ENCODE measurements at regions of chr11 and their contacts with region 1.

Region 1: DNA sequence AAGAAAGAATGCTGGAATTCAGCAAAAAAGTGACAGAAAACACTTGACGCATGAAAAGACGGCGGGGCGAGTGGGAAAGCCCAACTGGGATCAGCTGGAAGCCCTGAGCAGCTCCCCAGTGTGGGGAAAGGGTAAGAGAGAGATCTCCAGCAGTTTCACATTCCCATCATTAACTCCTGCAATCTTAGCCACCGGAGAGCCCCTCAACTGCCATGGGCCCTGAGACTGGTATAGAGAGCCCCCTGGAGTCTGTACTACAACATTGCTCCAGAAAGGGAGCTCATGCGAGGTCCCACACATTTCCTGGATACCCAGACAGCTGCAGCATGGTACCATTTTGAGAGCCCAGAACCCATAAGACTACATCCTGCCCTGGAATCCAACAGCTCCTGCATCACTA is 31.1 kb downstream of the MRGPRX4 start:
- DNase-seq: peak; percentile 55
- ATAC-seq: peak; percentile 100
- H3K4me3 Mint-ChIP-seq: peak overlapping the region; percentile 31; the same call in 1 of the 2 replicates
- H3K27ac Mint-ChIP-seq: no peak overlapping the region
- H3K4me1 Mint-ChIP-seq: no peaks in the 10 kb centered on the region
- H3K27me3 Mint-ChIP-seq: peaks cover 1% of the 10 kb centered on the region
- CTCF ChIP-seq: peak; percentile 63

Region 2: DNA sequence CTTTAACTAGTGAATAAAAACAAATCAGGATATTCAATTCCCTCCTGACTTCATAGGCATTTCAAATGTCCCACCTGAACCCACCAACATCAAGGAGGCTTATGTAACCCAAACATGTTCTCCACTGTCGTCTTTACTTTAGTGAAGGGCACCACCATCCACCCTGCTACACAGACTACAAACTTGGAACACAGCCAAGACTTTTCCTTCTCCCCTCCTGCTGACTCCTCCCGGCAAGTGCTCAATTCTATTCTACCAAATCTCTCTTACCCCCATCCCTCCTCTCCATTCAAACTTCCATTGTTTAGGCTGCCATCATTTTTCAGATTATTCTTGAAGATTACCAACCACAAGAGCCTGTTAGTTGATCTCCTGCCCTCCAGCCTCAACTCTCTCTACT is 122.2 kb before region 1 on chr11:
- CTCF ChIA-PET with region 1: no interaction called
- POLR2A ChIA-PET with region 1: no interaction called
- DNase-seq: no peak
- ATAC-seq: no peak
- H3K4me3 Mint-ChIP-seq: no peak overlapping the region
- H3K27ac Mint-ChIP-seq: no peak overlapping the region
- H3K4me1 Mint-ChIP-seq: peaks cover 4% of the 10 kb centered on the region; the same call in 1 of the 2 replicates
- H3K27me3 Mint-ChIP-seq: no peaks in the 10 kb centered on the region
- CTCF ChIP-seq: no peak

Region 3: GRCh38 chr11:18105802-18106574 is 97.7 kb before region 1 on chr11 and contains the start of gene SAAL1:
- CTCF ChIA-PET with region 1: interaction called, 12 read pairs
- POLR2A ChIA-PET with region 1: no interaction called
- DNase-seq: peak; percentile 95
- ATAC-seq: peak; percentile 97
- H3K4me3 Mint-ChIP-seq: peak within 1 kb of the TSS; percentile 93
- H3K27ac Mint-ChIP-seq: no peak within 1 kb of the TSS
- H3K4me1 Mint-ChIP-seq: peaks cover 11% of the 10 kb centered on the region
- H3K27me3 Mint-ChIP-seq: peaks cover 15% of the 10 kb centered on the region
- CTCF ChIP-seq: peak; percentile 71
- total RNA-seq, gene SAAL1: 38.1 to 40.9 TPM (median 39.8 TPM) in 3 replicates

Region 4: GRCh38 chr11:18171377-18172000 is 32.2 kb before region 1 on chr11:
- CTCF ChIA-PET with region 1: interaction called, 49 read pairs
- POLR2A ChIA-PET with region 1: no interaction called
- DNase-seq: peak; percentile 53
- ATAC-seq: peak; percentile 94
- H3K4me3 Mint-ChIP-seq: no peak overlapping the region
- H3K27ac Mint-ChIP-seq: no peak overlapping the region
- H3K4me1 Mint-ChIP-seq: no peaks in the 10 kb centered on the region
- H3K27me3 Mint-ChIP-seq: no peaks in the 10 kb centered on the region; the same call in none of the 2 replicates
- CTCF ChIP-seq: peak; percentile 49

Region 5: GRCh38 chr11:18221274-18221876 is 17.7 kb after region 1 on chr11:
- CTCF ChIA-PET with region 1: interaction called, 15 read pairs
- POLR2A ChIA-PET with region 1: no interaction called
- DNase-seq: no peak
- ATAC-seq: no peak
- H3K4me3 Mint-ChIP-seq: no peak overlapping the region
- H3K27ac Mint-ChIP-seq: no peak overlapping the region
- H3K4me1 Mint-ChIP-seq: no peaks in the 10 kb centered on the region
- H3K27me3 Mint-ChIP-seq: peaks cover 12% of the 10 kb centered on the region; the same call in 1 of the 2 replicates
- CTCF ChIP-seq: no peak

Region 6: DNA sequence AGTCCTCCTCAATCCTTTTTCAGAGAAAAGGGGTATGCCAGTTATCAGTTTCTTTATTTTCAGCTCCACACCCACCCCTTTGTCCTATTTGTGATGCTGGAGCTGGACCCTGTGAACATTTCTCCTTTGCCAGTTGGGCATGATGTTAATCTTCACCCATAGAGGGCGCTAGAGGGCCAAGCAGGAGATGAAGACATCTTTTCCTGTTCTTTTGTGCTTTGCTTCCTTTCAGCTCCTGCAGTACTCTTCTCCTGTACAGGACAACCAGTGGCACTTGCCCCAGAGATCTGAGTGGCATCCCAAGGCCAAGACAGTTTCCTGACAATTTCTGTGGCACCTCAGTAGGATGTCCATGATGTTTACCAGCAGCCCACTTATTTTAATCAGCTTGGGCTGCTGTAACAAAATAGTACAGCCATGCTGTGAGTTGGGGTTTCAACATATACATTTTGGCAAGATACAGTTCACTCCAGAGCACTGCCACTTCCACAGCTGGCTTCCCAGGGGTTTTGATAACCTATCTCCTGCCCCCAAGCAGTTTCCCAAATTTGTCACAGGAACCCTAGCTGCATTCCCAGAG is 40.1 kb after region 1 on chr11:
- CTCF ChIA-PET with region 1: interaction called, 15 read pairs
- POLR2A ChIA-PET with region 1: no interaction called
- DNase-seq: peak; percentile 70
- ATAC-seq: peak; percentile 89
- H3K4me3 Mint-ChIP-seq: no peak overlapping the region
- H3K27ac Mint-ChIP-seq: no peak overlapping the region
- H3K4me1 Mint-ChIP-seq: no peaks in the 10 kb centered on the region
- H3K27me3 Mint-ChIP-seq: peaks cover 6% of the 10 kb centered on the region; the same call in 1 of the 2 replicates
- CTCF ChIP-seq: peak; percentile 89

Region 7: GRCh38 chr11:18352581-18352980 is 148.9 kb after region 1 on chr11:
- CTCF ChIA-PET with region 1: no interaction called
- POLR2A ChIA-PET with region 1: no interaction called
- DNase-seq: no peak
- ATAC-seq: no peak
- H3K4me3 Mint-ChIP-seq: no peak overlapping the region
- H3K27ac Mint-ChIP-seq: no peak overlapping the region
- H3K4me1 Mint-ChIP-seq: no peaks in the 10 kb centered on the region
- H3K27me3 Mint-ChIP-seq: no peaks in the 10 kb centered on the region
- CTCF ChIP-seq: no peak

Measured in WTC11 (cell line).